ENCODE measurements at regions of chr13 and their contacts with region 1.

Region 1: DNA sequence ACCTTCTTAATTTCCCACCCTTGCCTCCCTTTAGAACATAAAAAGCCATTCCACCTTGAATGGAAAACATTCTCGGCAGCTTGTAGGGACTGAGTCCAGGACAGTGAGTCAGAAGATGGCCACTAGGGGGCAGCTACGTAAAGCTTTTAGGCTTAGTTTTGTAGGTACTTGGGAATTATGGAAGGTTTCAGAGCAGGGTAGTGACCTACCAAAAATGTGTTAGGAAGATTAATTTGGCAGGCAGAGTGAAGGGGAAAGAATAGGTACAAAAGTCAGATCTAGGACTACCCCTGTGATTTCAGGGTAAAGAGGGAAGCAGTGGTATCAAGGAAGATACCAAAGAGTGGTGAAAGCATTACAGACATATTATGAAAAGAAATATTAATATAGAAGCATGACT is 198.4 kb downstream of the NDFIP2 start:
- DNase-seq: peak; percentile 46 to 68
- ATAC-seq: peak; percentile 72 to 91
- H3K4me3 ChIP-seq: no peak overlapping the region
- H3K27ac ChIP-seq: no peak overlapping the region
- H3K4me1 ChIP-seq: peaks cover 0 to 8% of the 10 kb centered on the region in 2 donors
- H3K27me3 ChIP-seq: no peaks in the 10 kb centered on the region
- CTCF ChIP-seq: peak; percentile 73 to 84 (median 76)
- POLR2A ChIP-seq: no peak

Region 2: DNA sequence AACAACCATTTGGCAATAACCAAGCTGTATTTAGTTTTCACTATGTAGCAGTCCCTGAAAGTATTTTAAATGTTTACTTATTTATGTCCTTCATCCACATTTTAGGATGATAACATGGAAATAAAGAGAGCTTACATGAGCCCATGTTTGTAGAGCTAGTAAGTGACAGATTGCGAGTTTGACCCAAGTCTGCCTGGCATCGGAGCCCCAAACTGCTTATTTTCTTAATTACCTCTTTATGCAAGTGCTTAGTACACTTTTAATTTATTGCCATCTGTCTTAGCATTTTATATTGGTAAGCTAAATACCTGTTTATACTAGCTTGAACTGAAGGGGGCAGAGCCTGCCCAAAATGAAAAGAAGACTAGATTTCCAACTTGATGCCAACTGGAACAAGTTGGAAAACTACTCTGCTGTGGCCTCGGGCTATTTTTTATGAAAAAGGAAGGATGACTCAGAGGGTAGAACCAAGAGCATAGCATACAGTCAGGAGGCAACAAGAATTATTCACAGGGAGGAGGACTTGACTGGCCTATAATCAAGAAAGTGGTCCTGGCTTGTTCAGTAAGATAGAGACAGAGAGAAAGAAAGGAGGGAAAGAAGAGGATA is 48.2 kb before region 1 on chr13:
- in situ Hi-C with region 1: no loop called
- intact Hi-C with region 1: loop called (anchors 1 kb)
- DNase-seq: peak; percentile 5 to 38
- ATAC-seq: peak; percentile 99
- H3K4me3 ChIP-seq: no peak overlapping the region
- H3K27ac ChIP-seq: peak overlapping the region in 3 of 4 donors; percentile 52 to 65 (median 61)
- H3K4me1 ChIP-seq: peaks cover 4 to 8% of the 10 kb centered on the region in 2 donors
- H3K27me3 ChIP-seq: no peaks in the 10 kb centered on the region
- CTCF ChIP-seq: peak in 4 of 5 experiments; percentile 19 to 58 (median 56)
- POLR2A ChIP-seq: no peak

Region 3: DNA sequence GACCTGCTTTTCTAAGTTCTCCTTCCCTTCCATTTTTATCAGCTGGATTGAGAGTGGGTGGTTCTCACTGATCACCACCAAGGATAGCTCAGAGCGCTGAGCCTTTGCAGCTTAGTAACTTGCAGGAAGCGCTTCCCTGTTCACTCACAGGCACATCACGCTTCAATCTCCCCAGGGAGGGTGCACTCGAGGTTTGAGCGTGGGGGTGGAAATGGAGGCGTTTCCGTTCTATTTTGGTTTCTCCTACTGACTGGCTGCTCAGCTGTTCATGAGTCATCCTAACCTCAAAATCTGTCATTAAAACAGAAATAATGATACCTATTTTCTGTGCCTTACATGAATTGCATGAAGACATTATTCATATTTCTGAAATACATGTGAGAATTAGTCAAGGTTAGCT is 369.5 kb after region 1 on chr13:
- in situ Hi-C with region 1: no loop called
- intact Hi-C with region 1: loop called (anchors 10 kb)
- DNase-seq: peak; percentile 89 to 90
- ATAC-seq: peak; percentile 100
- H3K4me3 ChIP-seq: no peak overlapping the region
- H3K27ac ChIP-seq: peak overlapping the region; percentile 44 to 60 (median 58)
- H3K4me1 ChIP-seq: peaks cover 23 to 27% of the 10 kb centered on the region in 2 donors
- H3K27me3 ChIP-seq: no peaks in the 10 kb centered on the region
- CTCF ChIP-seq: no peak
- POLR2A ChIP-seq: no peak

Region 4: DNA sequence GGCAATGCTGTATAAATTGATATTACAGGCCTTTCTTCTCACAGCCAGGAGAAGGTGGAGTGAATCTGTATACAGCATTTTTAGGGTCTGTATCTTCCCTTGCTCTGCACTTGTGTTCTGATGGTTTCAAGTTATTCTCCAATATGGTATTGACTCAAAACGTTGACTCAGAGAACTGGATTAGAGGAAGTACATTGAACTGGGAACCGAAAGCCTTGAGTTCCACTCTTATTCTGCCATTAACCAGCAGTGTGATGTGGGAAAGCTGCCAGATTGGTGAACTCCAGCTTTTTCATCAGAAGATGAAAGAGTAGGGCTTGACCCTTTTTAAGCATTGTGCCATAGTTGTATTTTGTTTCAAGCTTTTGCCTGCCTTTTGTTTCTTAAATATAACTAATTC is 493.9 kb after region 1 on chr13:
- in situ Hi-C with region 1: no loop called
- intact Hi-C with region 1: no loop called
- DNase-seq: peak; percentile 5 to 13
- ATAC-seq: no peak
- H3K4me3 ChIP-seq: no peak overlapping the region
- H3K27ac ChIP-seq: no peak overlapping the region
- H3K4me1 ChIP-seq: no peaks in the 10 kb centered on the region
- H3K27me3 ChIP-seq: no peaks in the 10 kb centered on the region
- CTCF ChIP-seq: no peak
- POLR2A ChIP-seq: no peak

Region 5: GRCh38 chr13:80363890-80364503 is 684.7 kb after region 1 on chr13:
- in situ Hi-C with region 1: loop called (anchors 5 to 25 kb)
- intact Hi-C with region 1: loop called (anchors 1 kb)
- DNase-seq: no peak
- ATAC-seq: peak; percentile 43 to 60
- H3K4me3 ChIP-seq: peak overlapping the region; percentile 29 to 38 (median 36)
- H3K27ac ChIP-seq: peak overlapping the region in 3 of 4 donors; percentile 26 to 40 (median 29)
- H3K4me1 ChIP-seq: peaks cover 9 to 13% of the 10 kb centered on the region in 2 donors
- H3K27me3 ChIP-seq: no peaks in the 10 kb centered on the region
- CTCF ChIP-seq: peak; percentile 46 to 87 (median 61)
- POLR2A ChIP-seq: no peak

Region 6: DNA sequence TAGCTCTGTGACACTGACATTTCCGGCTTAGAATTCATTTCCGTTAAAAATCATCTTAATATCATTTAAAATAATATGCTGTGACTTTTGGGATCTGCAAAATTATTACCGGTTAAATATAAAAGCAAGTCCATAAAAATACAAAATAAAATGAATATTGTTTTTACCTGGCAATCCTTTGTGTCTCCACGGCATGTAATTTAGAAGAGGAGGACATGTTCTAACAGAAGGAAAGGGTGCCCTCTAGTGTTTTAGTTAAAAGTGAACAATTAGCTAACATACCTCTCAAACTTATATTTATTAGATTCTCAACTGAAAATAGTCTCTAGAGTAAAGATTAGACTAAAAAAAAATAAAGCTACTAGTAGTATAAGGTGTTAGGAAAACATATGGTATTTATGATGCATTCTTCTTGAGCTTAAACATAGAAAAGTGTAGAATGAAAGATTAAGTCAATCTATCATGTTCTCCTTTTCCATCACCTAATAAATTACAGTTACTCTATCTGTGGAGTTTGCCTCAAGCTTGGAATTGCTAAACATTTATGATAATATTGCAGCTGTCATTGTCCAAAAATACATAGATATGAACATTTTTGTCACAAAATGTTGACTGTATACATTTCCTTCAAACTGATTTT is 1338.3 kb after region 1 on chr13:
- in situ Hi-C with region 1: loop called in 3 of 4 experiments (anchors 25 kb)
- intact Hi-C with region 1: loop called (anchors 10 kb)
- DNase-seq: no peak
- ATAC-seq: peak in 1 of 2 donors; percentile 45
- H3K4me3 ChIP-seq: peak overlapping the region in 3 of 4 donors; percentile 4 to 9 (median 4)
- H3K27ac ChIP-seq: no peak overlapping the region
- H3K4me1 ChIP-seq: no peaks in the 10 kb centered on the region
- H3K27me3 ChIP-seq: no peaks in the 10 kb centered on the region
- CTCF ChIP-seq: peak; percentile 36 to 58 (median 47)
- POLR2A ChIP-seq: no peak